ENCODE measurements at regions of chr13 and their contacts with region 1.

Region 1: GRCh38 chr13:49806126-49806536 is 13.6 kb upstream of the KPNA3 start:
- DNase-seq: no peak
- ATAC-seq: no peak
- H3K4me3 ChIP-seq: no peak overlapping the region
- H3K27ac ChIP-seq: no peak overlapping the region
- H3K4me1 ChIP-seq: no peaks in the 10 kb centered on the region
- H3K27me3 ChIP-seq: no peaks in the 10 kb centered on the region
- CTCF ChIP-seq: no peak

Region 2: GRCh38 chr13:48110931-48111721 is 1695.0 kb before region 1 on chr13:
- CTCF ChIA-PET with region 1: no interaction called
- POLR2A ChIA-PET with region 1: no interaction called
- in situ Hi-C with region 1: no loop called
- intact Hi-C with region 1: no loop called
- DNase-seq: no peak
- ATAC-seq: peak; percentile 58
- H3K4me3 ChIP-seq: no peak overlapping the region
- H3K27ac ChIP-seq: peak overlapping the region; percentile 17; the same call in 1 of the 2 replicates
- H3K4me1 ChIP-seq: no peaks in the 10 kb centered on the region
- H3K27me3 ChIP-seq: no peaks in the 10 kb centered on the region
- CTCF ChIP-seq: no peak

Region 3: DNA sequence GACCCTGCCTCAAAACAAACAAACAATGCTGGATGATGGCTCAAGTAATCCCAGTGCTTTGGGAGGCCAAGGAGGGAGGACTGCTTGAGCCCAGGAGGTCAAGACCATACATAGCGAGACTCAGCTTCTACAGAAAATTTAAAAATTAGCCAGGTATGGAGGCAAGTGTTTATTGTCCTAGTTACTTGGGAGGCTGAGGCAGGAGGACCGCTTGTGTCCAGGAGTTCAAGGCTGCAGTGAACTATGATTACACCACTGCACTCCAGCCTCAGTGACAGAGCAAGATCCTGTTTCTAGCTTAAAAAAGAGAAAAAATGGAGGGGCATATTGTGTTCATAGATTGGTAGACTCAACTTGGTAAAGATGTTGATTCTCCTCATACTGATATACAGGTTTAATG is 49.9 kb before region 1 on chr13:
- CTCF ChIA-PET with region 1: no interaction called
- POLR2A ChIA-PET with region 1: interaction called, 10 read pairs
- in situ Hi-C with region 1: no loop called
- intact Hi-C with region 1: no loop called
- DNase-seq: no peak
- ATAC-seq: no peak
- H3K4me3 ChIP-seq: no peak overlapping the region
- H3K27ac ChIP-seq: no peak overlapping the region
- H3K4me1 ChIP-seq: no peaks in the 10 kb centered on the region
- H3K27me3 ChIP-seq: no peaks in the 10 kb centered on the region
- CTCF ChIP-seq: no peak

Region 4: GRCh38 chr13:49869519-49869918 is 63.4 kb after region 1 on chr13:
- CTCF ChIA-PET with region 1: no interaction called
- POLR2A ChIA-PET with region 1: no interaction called
- in situ Hi-C with region 1: no loop called
- intact Hi-C with region 1: no loop called
- DNase-seq: no peak
- ATAC-seq: no peak
- H3K4me3 ChIP-seq: no peak overlapping the region
- H3K27ac ChIP-seq: no peak overlapping the region
- H3K4me1 ChIP-seq: no peaks in the 10 kb centered on the region
- H3K27me3 ChIP-seq: no peaks in the 10 kb centered on the region
- CTCF ChIP-seq: peak; percentile 27

Measured in Panc1 (cell line).